Activated T-helper 1 cell treated with anti-CD3 and anti-CD28 coated beads, Interleukin-12 subunit alpha, Interleukin-12 subunit beta, Interleukin-2, Interleukin-4 antibody, amounts not matched to agents 30 ng/mL and 10 ng/mL and 1 ng/mL, durations not matched to agents 14 hours and 24 hours and 36 hours (primary cell): ENCODE measurements at regions of chr7 and their contacts with region 1.

Region 1: DNA sequence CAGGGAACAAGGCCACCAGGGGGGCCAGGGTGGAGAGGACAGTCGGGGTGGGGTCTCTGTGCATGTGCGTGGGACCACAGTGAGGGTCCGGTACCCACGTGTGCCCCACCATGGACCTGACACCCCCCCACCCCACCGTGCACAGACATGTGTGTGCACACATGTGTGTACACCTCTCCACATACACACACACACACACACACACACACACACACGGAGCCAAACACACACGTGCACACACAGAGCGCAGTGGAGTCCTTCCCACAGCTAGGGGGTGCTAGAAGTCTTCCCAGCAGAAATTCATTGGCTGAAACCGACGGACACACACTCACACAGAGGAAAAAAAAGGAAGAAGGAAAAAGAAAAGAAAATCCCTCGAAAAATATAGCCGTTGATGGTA is 42.8 kb upstream of the GNA12 start:
- DNase-seq: peak; percentile 30
- H3K4me3 Mint-ChIP-seq: no peak overlapping the region
- H3K27ac Mint-ChIP-seq: no peak overlapping the region
- H3K4me1 Mint-ChIP-seq: peaks cover 5% of the 10 kb centered on the region
- H3K27me3 Mint-ChIP-seq: peaks cover 1% of the 10 kb centered on the region

Region 2: GRCh38 chr7:3200504-3200903 is 313.6 kb after region 1 on chr7:
- intact Hi-C with region 1: loop called (anchors 1 kb)
- DNase-seq: peak; percentile 11
- H3K4me3 Mint-ChIP-seq: no peak overlapping the region
- H3K27ac Mint-ChIP-seq: peak overlapping the region; percentile 14
- H3K4me1 Mint-ChIP-seq: no peaks in the 10 kb centered on the region
- H3K27me3 Mint-ChIP-seq: peaks cover 11% of the 10 kb centered on the region

Region 3: GRCh38 chr7:3897438-3898385 is 1010.8 kb after region 1 on chr7:
- intact Hi-C with region 1: loop called (anchors 5 kb)
- DNase-seq: peak; percentile 22
- H3K4me3 Mint-ChIP-seq: no peak overlapping the region
- H3K27ac Mint-ChIP-seq: no peak overlapping the region
- H3K4me1 Mint-ChIP-seq: no peaks in the 10 kb centered on the region
- H3K27me3 Mint-ChIP-seq: peaks cover 14% of the 10 kb centered on the region